ENCODE measurements at regions of chr14 and their contacts with region 1.

Region 1: DNA sequence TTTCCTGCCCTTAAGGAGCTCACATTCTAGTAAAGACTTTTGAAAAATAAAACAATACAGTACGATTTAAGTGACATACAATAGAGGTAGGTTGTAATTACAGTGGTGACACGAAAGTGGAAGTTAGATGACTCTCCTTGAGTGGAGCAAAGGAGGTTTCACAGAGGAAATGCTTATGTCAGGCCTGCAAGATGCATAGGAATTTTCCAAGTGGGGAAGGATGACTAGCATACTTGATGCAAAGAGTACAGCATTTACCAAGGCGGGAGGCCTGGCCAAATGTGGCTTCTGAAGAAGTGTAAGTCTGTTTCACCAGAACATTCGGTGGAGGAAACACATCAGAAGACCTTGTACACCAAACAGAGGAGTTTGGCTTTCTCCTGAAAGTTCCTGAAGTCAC is 55.2 kb downstream of the ERO1A start:
- DNase-seq: no peak

Region 2: GRCh38 chr14:52552063-52552988 is 87.8 kb before region 1 on chr14 and contains the starts of genes GPR137C and TXNDC16:
- in situ Hi-C with region 1: loop called (anchors 10 kb)
- DNase-seq: peak; percentile 100
- total RNA-seq, gene GPR137C: 2.5 and 7.8 TPM in 2 replicates
- total RNA-seq, gene TXNDC16: 10.8 and 17.1 TPM in 2 replicates

Region 3: DNA sequence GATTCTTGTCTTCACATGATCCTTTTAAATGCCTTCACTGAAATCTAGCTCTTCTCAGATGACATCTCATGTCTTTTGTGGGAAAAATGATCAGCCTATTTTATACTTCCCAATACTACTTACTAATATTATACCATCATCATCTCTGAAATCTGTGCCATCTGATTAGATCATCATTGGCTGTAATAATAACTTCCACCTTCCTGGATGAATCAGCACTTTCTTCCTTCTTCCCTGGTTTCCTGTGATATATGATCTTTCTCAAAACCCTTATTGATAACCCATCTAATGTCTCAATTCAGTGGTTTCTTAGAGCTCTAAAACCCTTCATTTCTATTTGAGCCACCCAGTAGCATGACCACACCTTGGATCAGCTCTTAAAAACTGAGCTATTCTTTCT is 56.6 kb before region 1 on chr14:
- in situ Hi-C with region 1: no loop called
- DNase-seq: no peak

Region 4: DNA sequence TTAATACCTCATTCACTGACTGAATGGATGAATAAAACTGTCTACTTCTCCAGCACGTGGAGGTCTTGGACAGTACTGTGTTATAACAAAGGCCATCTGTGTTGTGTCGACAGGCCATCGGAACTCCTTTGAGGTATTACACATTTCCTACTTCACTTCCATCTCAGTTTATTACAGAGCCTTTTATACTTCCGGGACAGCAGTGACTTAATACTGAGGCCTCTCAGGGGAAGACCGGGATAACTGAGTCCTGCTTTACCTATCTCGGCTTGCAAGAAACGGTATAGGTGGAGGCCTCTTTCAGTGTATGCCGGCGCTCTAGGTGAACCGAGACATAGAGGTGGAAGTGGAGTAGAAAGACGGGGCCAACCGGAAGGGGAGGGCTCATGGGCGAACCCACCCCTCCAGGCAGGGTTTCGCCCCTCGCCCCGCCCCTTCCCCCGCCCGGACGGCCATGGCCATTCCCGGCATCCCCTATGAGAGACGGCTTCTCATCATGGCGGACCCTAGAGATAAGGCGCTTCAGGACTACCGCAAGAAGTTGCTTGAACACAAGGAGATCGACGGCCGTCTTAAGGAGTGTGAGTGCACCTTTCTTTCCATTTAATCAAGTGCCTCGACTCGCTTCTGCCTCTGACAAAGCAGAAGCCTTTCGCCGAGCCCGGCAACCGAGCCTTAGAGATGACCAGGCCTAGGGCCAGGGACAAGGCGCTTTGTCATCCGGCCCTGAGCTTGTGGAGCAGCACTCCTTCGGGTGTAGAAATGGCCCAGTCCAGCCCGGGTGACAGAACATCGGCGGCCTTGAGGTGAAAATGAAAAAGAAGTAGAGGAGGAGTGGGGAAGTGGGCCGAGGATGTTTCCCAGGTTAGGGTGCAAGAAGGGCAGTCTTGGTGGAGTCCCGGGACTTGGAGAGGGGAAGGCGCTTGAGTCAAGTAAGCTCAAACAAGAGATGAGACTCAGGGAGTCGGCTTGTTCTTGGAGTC is 66.9 kb after region 1 on chr14 and contains the start of gene PSMC6:
- in situ Hi-C with region 1: no loop called
- DNase-seq: peak; percentile 97
- total RNA-seq, gene PSMC6: 247 and 252 TPM in 2 replicates

Region 5: GRCh38 chr14:52741865-52742264 is 101.7 kb after region 1 on chr14:
- in situ Hi-C with region 1: no loop called
- DNase-seq: no peak

Region 6: GRCh38 chr14:52755607-52756253 is 115.6 kb after region 1 on chr14:
- in situ Hi-C with region 1: no loop called
- DNase-seq: no peak